ENCODE measurements at regions of chr3 and their contacts with region 1.

Region 1: GRCh38 chr3:4633078-4634004 is 140.2 kb downstream of the ITPR1 start:
- DNase-seq: no peak
- ATAC-seq: peak; percentile 77

Region 2: DNA sequence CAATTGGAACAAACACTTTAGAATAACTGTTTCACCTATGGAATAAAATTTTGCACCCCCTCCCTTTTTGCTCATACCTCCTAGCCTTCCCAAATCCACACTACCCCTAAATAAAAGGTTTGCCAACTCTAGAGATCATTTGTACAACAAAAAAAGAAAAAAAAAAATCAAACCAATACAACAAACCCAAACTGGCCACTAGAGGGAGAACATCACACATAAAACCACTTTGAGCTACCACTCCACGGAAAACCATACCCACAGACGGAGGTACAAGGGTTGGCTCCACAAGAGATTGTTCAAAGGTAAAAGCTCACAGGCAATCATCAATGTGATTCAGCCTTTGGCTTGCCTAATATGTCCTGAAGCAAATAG is 282.6 kb before region 1 on chr3:
- intact Hi-C with region 1: loop called (anchors 2 kb)
- DNase-seq: no peak
- ATAC-seq: peak; percentile 90

Region 3: GRCh38 chr3:4493014-4493940 is 140.1 kb before region 1 on chr3 and contains the start of gene ITPR1:
- intact Hi-C with region 1: loop called (anchors 10 kb)
- DNase-seq: peak; percentile 99
- ATAC-seq: peak; percentile 97
- total RNA-seq, gene ITPR1: 16.6 TPM

Region 4: GRCh38 chr3:4804161-4805058 is 171.1 kb after region 1 on chr3:
- intact Hi-C with region 1: no loop called
- DNase-seq: no peak
- ATAC-seq: no peak